ENCODE measurements at regions of chr4 and their contacts with region 1.

Region 1: GRCh38 chr4:110631584-110632505 is 9.0 kb upstream of the PITX2 start:
- DNase-seq: peak; percentile 81
- ATAC-seq: peak; percentile 95
- H3K4me3 Mint-ChIP-seq: peak overlapping the region; percentile 25
- H3K27ac Mint-ChIP-seq: no peak overlapping the region
- H3K4me1 Mint-ChIP-seq: peaks cover 13% of the 10 kb centered on the region
- H3K27me3 Mint-ChIP-seq: peaks cover 80% of the 10 kb centered on the region

Region 2: GRCh38 chr4:110617646-110618580 is 13.9 kb before region 1 on chr4:
- CTCF ChIA-PET with region 1: interaction called, 4 read pairs
- POLR2A ChIA-PET with region 1: interaction called, 3 read pairs
- intact Hi-C with region 1: loop called (anchors 1 to 2 kb)
- DNase-seq: no peak
- ATAC-seq: no peak
- H3K4me3 Mint-ChIP-seq: no peak overlapping the region
- H3K27ac Mint-ChIP-seq: no peak overlapping the region
- H3K4me1 Mint-ChIP-seq: peaks cover 38% of the 10 kb centered on the region
- H3K27me3 Mint-ChIP-seq: peaks cover 81% of the 10 kb centered on the region

Region 3: GRCh38 chr4:110769578-110769977 is 137.7 kb after region 1 on chr4:
- CTCF ChIA-PET with region 1: no interaction called
- POLR2A ChIA-PET with region 1: no interaction called
- intact Hi-C with region 1: no loop called
- DNase-seq: no peak
- ATAC-seq: no peak
- H3K4me3 Mint-ChIP-seq: no peak overlapping the region
- H3K27ac Mint-ChIP-seq: no peak overlapping the region
- H3K4me1 Mint-ChIP-seq: no peaks in the 10 kb centered on the region
- H3K27me3 Mint-ChIP-seq: no peaks in the 10 kb centered on the region

Region 4: DNA sequence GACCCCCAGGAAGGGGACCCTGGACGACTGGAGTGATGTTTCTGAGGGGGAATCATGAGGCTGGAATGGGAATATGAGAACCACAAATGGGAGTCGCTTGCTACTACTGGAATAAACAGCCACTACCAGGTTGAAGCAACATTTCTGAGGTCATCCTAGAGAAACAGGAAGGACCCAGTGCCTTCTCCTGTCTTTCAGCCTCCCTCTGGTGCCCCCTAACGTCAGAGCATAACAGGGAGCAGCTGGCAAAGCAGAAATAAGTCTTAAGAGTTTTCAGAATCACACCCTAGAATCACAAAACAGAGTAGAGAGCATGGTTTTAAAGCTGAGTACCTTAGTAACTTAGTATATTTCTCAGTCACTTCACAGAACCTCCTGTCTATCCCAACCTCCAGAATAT is 338.8 kb after region 1 on chr4:
- CTCF ChIA-PET with region 1: no interaction called
- POLR2A ChIA-PET with region 1: no interaction called
- intact Hi-C with region 1: loop called in 1 of 2 experiments (anchors 5 kb)
- DNase-seq: peak; percentile 35
- ATAC-seq: no peak
- H3K4me3 Mint-ChIP-seq: no peak overlapping the region
- H3K27ac Mint-ChIP-seq: no peak overlapping the region
- H3K4me1 Mint-ChIP-seq: no peaks in the 10 kb centered on the region
- H3K27me3 Mint-ChIP-seq: no peaks in the 10 kb centered on the region

Region 5: GRCh38 chr4:111631215-111631999 is 999.6 kb after region 1 on chr4:
- CTCF ChIA-PET with region 1: no interaction called
- POLR2A ChIA-PET with region 1: no interaction called
- intact Hi-C with region 1: loop called (anchors 2 to 5 kb)
- DNase-seq: no peak
- ATAC-seq: no peak
- H3K4me3 Mint-ChIP-seq: no peak overlapping the region
- H3K27ac Mint-ChIP-seq: no peak overlapping the region
- H3K4me1 Mint-ChIP-seq: no peaks in the 10 kb centered on the region
- H3K27me3 Mint-ChIP-seq: no peaks in the 10 kb centered on the region

Region 6: DNA sequence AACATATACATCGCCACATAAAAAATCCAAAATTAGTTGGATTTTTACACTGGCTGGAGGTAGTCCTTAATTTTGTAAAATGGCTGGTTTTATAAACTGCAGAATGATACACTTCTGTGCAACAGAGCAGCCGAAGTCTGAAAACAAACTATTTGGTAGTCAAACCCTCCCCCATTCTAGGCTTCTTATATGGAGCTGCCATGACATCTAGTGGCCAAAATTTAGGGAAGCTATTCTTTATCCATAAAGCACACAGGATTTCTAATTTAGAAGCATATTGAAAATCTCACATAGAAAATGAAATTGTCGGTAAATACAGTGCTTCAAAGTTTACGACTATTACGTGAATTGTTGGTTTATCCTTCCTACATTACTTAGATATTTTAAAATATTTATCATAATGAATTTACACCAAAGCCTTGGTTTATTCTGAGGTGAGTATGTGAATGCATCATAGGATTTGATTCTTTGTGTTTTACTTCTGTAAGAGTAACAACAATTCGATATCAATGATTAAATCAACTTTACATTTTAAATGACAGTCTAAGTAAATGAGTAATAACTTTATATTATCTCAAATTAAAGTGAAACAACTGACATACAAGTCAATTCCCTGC is 1400.0 kb after region 1 on chr4:
- CTCF ChIA-PET with region 1: no interaction called
- POLR2A ChIA-PET with region 1: no interaction called
- intact Hi-C with region 1: loop called in 1 of 2 experiments (anchors 5 kb)
- DNase-seq: peak; percentile 28
- ATAC-seq: no peak
- H3K4me3 Mint-ChIP-seq: no peak overlapping the region
- H3K27ac Mint-ChIP-seq: no peak overlapping the region
- H3K4me1 Mint-ChIP-seq: no peaks in the 10 kb centered on the region
- H3K27me3 Mint-ChIP-seq: peaks cover 19% of the 10 kb centered on the region

Measured in activated CD4-positive, alpha-beta T cell treated with anti-CD3 and anti-CD28 coated beads for 36 hours (primary cell).